GM12878 (cell line): ENCODE measurements at regions of chr17 and their contacts with region 1.

Region 1: DNA sequence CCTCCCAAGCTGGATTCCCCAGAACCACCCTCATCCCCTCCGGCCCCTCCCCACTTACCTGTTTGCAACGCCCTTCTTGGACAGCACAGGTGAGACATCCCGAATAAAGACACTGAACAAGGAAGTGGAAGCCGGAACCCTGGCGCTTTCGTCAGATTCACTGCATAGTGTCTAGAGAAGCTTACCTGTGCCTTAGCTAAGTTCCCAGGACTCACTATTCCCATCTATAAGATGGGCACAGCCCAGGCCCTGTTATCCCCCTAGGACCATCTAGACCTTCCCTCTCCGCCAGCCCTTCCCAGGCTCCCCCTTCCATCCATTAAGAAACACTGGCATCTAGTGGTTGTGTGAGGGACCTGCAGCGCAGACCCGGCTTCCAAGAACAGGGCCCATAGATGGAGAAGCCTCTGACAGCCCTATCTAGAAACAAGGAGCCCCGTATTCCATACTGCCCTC is 26.9 kb upstream of the RPL38 start:
- DNase-seq: no peak
- ATAC-seq: peak; percentile 89
- H3K4me3 ChIP-seq: no peak overlapping the region
- H3K27ac ChIP-seq: no peak overlapping the region
- H3K4me1 ChIP-seq: no peaks in the 10 kb centered on the region
- H3K27me3 ChIP-seq: peaks cover 0 to 2% of the 10 kb centered on the region in 2 experiments; a peak in 3 of 4 replicates
- CTCF ChIP-seq: peak; percentile 75 to 90 (median 77)
- EP300 ChIP-seq: no peak
- POLR2A ChIP-seq: no peak
- RAD21 ChIP-seq: peak; percentile 87

Region 2: GRCh38 chr17:73429440-73430164 is 747.0 kb before region 1 on chr17:
- CTCF ChIA-PET with region 1: interaction called, 5 read pairs
- POLR2A ChIA-PET with region 1: no interaction called
- RAD21 ChIA-PET with region 1: no interaction called
- SMC1A ChIA-PET with region 1: no interaction called
- in situ Hi-C with region 1: loop called (anchors 10 kb)
- intact Hi-C with region 1: loop called (anchors 2 kb)
- DNase-seq: peak; percentile 7
- ATAC-seq: peak; percentile 100
- H3K4me3 ChIP-seq: no peak overlapping the region
- H3K27ac ChIP-seq: no peak overlapping the region
- H3K4me1 ChIP-seq: no peaks in the 10 kb centered on the region
- H3K27me3 ChIP-seq: no peaks in the 10 kb centered on the region; a peak in 1 of 4 replicates
- CTCF ChIP-seq: peak; percentile 93 to 95 (median 93)
- EP300 ChIP-seq: no peak
- POLR2A ChIP-seq: no peak
- RAD21 ChIP-seq: peak; percentile 89

Region 3: DNA sequence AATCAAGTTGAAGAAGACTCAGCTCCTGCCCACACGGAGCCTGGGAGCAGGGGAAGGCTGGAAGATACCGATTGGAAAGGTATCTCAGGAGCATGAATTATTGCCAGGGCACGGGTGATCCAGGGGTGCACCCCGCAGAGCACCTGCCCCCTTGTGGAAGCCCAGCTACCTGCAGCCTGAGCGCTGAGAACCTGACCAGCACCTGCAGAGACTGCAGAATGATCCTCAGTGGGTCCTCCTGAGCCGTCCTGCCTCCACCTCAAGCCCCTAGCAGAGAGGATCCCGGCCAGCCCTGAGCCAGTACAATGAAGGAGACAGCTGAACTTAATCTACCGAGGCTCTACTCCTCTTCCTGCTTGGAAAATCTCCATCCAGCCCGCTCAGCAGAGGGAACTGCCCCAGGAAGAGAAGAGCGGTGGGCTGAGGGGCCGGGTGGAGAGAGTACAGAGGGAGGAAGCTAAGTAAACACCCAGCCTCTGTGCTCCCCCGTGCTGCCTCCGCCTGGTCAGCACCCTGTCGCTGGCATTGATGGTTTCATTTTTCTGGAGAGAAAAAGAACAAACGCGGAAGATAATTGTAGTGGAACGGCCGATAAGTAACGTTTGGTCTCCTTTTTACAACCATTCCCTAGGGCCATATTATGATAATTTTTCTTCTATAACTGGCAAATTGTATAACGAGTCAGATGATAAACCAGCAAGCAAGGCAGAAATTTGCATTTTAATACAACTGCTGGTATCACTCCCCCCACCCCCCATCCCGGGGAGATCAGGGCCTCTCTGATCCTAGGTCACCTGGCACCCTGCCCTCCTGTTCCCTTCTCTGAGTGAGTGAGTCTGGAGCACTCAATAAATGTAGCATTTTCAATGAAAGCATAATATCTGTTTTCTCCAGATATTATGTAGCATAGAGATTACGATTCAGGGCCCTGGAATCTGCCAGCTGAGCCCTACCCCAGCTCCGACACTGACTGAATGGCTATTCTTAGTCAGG is 177.6 kb before region 1 on chr17:
- CTCF ChIA-PET with region 1: no interaction called
- POLR2A ChIA-PET with region 1: no interaction called
- RAD21 ChIA-PET with region 1: no interaction called
- SMC1A ChIA-PET with region 1: no interaction called
- in situ Hi-C with region 1: no loop called
- intact Hi-C with region 1: loop called (anchors 10 kb)
- DNase-seq: no peak
- ATAC-seq: peak; percentile 96
- H3K4me3 ChIP-seq: no peak overlapping the region
- H3K27ac ChIP-seq: no peak overlapping the region
- H3K4me1 ChIP-seq: no peaks in the 10 kb centered on the region
- H3K27me3 ChIP-seq: no peaks in the 10 kb centered on the region; a peak in 1 of 4 replicates
- CTCF ChIP-seq: peak; percentile 80 to 86 (median 82)
- EP300 ChIP-seq: no peak
- POLR2A ChIP-seq: no peak
- RAD21 ChIP-seq: peak; percentile 41

Region 4: DNA sequence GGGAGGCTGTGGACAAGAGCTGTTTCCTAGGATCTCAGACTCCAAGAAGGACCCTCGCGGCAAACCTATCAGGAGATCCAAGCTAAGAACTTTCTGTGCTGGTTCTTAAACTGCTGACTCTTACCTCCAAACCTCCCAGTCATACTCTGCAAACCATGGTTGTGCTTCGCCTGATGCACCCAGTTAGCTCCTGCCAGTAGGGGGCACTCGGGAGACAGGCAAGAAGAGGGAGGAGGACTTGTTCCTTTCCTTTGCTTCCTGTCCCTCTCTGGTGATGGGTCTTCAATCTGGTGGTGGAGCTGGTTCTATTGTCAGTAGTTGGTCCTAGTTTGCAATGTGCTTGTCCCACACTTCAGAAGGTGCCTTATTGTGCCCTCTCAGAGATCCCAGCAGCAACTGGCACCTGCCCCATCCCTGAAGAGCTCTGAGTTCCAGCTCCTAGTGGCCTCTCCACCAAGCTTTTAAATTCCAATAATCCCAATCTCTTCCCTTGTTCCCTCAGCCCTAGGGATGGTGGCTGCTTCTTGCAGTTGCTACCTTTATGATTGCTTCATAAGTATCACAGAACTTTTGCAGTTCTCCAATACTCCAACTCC is 86.6 kb before region 1 on chr17:
- CTCF ChIA-PET with region 1: interaction called, 19 read pairs
- POLR2A ChIA-PET with region 1: no interaction called
- RAD21 ChIA-PET with region 1: interaction called, 3 read pairs
- SMC1A ChIA-PET with region 1: interaction called, 6 read pairs
- in situ Hi-C with region 1: no loop called
- intact Hi-C with region 1: loop called (anchors 1 kb)
- DNase-seq: peak; percentile 11
- ATAC-seq: peak; percentile 79
- H3K4me3 ChIP-seq: no peak overlapping the region
- H3K27ac ChIP-seq: no peak overlapping the region
- H3K4me1 ChIP-seq: no peaks in the 10 kb centered on the region
- H3K27me3 ChIP-seq: no peaks in the 10 kb centered on the region; a peak in 1 of 4 replicates
- CTCF ChIP-seq: peak; percentile 68 to 90 (median 89)
- EP300 ChIP-seq: no peak
- POLR2A ChIP-seq: no peak
- RAD21 ChIP-seq: peak; percentile 52

Region 5: DNA sequence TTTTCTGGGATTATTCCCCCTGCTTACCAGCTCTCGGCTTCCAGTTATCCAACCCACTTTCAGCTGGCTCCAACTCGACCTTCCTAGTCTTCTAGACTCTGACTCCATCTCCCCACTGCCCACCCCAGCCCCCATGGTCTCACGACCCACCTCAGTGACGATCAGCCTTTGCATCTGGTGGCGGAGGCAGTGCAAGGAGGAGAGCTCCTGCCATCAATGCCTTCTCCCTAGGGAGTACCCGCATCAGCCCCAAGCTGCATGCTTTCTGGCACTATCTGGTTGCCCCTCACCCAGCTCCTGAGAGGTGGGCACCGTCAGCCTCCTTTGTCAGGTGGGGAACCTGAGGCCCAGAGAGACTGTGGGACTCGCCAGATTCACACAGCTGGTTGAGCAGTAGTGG is 45.7 kb before region 1 on chr17:
- CTCF ChIA-PET with region 1: no interaction called
- POLR2A ChIA-PET with region 1: no interaction called
- RAD21 ChIA-PET with region 1: no interaction called
- SMC1A ChIA-PET with region 1: no interaction called
- in situ Hi-C with region 1: no loop called
- intact Hi-C with region 1: no loop called
- DNase-seq: no peak
- ATAC-seq: no peak
- H3K4me3 ChIP-seq: no peak overlapping the region
- H3K27ac ChIP-seq: no peak overlapping the region
- H3K4me1 ChIP-seq: no peaks in the 10 kb centered on the region
- H3K27me3 ChIP-seq: peaks cover 2 to 3% of the 10 kb centered on the region in 2 experiments; a peak in 3 of 4 replicates
- CTCF ChIP-seq: no peak
- EP300 ChIP-seq: no peak
- POLR2A ChIP-seq: no peak
- RAD21 ChIP-seq: no peak

Region 6: DNA sequence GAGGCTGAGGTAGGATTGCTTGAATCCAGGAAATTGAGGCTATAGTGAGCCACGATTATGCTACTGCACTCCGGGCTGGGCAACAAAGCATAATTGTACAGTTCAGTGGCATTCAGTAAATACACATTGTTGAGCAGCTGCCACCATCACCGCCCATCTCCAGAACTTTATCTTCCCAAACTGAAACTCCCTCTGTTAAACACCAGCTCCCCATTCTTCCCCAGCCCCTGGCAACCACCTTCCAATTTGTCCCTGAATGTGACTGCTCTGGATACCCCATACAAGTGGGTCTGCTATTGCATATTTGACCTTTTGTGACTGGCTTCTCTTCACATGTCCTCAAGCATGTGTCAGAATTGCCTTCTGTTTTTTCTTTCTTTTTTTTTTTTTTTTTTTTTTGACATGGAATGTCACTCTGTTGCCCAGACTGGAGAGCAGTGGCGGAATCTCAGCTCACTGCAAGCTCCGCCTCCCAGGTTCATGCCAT is 29.8 kb after region 1 on chr17:
- CTCF ChIA-PET with region 1: no interaction called
- POLR2A ChIA-PET with region 1: no interaction called
- RAD21 ChIA-PET with region 1: no interaction called
- SMC1A ChIA-PET with region 1: no interaction called
- in situ Hi-C with region 1: no loop called
- intact Hi-C with region 1: no loop called
- DNase-seq: no peak
- ATAC-seq: no peak
- H3K4me3 ChIP-seq: peak overlapping the region; percentile 99
- H3K27ac ChIP-seq: no peak overlapping the region
- H3K4me1 ChIP-seq: peaks cover 9% of the 10 kb centered on the region
- H3K27me3 ChIP-seq: 0 out of 4 replicates have a peak, but pooled peaks cover 0 to under 1% of the 10 kb centered on the region in 2 experiments
- CTCF ChIP-seq: no peak
- EP300 ChIP-seq: no peak
- POLR2A ChIP-seq: no peak
- RAD21 ChIP-seq: no peak

Region 7: DNA sequence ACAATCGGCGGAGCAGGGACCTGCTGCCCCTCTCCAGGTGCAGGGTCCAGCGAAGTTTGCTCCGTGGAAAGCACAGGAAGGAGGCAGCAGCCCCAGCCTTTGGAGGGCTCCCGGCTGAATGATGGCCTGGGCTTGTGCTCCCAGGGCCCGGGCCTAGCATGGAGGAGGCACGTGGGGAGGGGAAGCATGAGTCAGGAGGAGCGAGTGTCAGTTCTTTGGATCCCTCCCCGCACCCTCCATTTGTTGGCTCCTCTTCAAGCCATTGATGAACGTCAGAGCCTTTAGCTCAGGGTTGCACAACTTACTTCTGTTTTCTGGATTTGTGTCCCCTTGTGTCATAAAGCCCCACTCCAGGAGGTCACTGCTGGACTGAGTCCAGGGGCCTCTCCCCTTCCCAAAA is 62.6 kb after region 1 on chr17:
- CTCF ChIA-PET with region 1: no interaction called
- POLR2A ChIA-PET with region 1: no interaction called
- RAD21 ChIA-PET with region 1: no interaction called
- SMC1A ChIA-PET with region 1: no interaction called
- in situ Hi-C with region 1: loop called (anchors 10 kb)
- intact Hi-C with region 1: no loop called
- DNase-seq: no peak
- ATAC-seq: no peak
- H3K4me3 ChIP-seq: no peak overlapping the region
- H3K27ac ChIP-seq: no peak overlapping the region
- H3K4me1 ChIP-seq: peaks cover 1% of the 10 kb centered on the region; the same call in 1 of the 2 replicates
- H3K27me3 ChIP-seq: no peaks in the 10 kb centered on the region
- CTCF ChIP-seq: no peak
- EP300 ChIP-seq: no peak
- POLR2A ChIP-seq: no peak
- RAD21 ChIP-seq: no peak

Region 8: DNA sequence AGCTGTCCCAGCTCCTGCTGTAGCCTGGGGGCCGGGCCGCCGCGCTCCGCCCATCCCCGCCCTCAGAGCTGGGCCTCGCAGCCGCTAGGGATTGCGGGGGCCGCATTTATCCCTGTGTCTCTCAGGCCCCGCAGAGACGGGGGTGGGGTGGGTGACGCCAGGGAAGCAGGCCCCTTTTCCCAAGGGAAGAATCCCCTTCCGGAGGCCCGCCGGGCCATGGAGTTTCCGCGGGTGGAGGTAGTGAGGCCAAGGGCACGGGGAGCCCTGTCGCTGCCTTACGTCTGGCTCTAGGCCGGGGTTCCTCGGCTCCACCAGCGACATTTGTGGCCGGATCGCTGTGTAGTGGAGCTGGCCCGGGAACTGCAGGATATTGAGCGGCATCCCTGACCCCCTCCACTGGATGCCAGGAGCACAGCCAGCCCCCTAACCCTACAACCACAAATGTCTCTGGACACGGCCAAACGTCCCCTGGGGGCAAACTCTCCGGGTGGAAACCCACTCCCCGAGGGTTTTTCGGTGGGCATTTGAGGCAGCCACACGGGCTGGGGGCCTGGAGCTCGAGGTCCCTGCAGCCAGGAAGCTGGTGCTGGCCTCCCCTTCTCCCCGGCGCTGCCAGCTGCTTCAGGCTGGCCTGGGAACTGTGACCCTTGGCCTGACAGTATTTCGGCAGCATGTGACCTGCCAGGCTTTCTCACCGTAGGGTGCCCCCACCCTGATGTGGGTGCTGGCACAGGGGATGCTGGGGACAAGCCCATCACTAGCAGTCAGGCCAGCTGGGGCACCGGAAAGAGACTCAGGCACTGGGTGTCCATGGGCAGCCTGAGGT is 277.8 kb after region 1 on chr17:
- CTCF ChIA-PET with region 1: no interaction called
- POLR2A ChIA-PET with region 1: no interaction called
- RAD21 ChIA-PET with region 1: no interaction called
- SMC1A ChIA-PET with region 1: no interaction called
- in situ Hi-C with region 1: no loop called
- intact Hi-C with region 1: no loop called
- DNase-seq: no peak
- ATAC-seq: peak; percentile 55
- H3K4me3 ChIP-seq: peak overlapping the region; percentile 8; the same call in 1 of the 2 replicates
- H3K27ac ChIP-seq: no peak overlapping the region
- H3K4me1 ChIP-seq: peaks cover 14% of the 10 kb centered on the region
- H3K27me3 ChIP-seq: peaks cover 0 to 2% of the 10 kb centered on the region in 2 experiments; a peak in 2 of 4 replicates
- CTCF ChIP-seq: no peak
- EP300 ChIP-seq: no peak
- POLR2A ChIP-seq: no peak
- RAD21 ChIP-seq: no peak